ENCODE measurements at regions of chr16 and their contacts with region 1.

Region 1: GRCh38 chr16:31179747-31180459 is at the start of gene FUS:
- DNase-seq: peak; percentile 91
- ATAC-seq: peak; percentile 69
- H3K4me3 Mint-ChIP-seq: peak within 1 kb of the TSS; percentile 96
- H3K27ac Mint-ChIP-seq: peak within 1 kb of the TSS; percentile 100
- H3K4me1 Mint-ChIP-seq: peaks cover 57% of the 10 kb centered on the region
- H3K27me3 Mint-ChIP-seq: no peaks in the 10 kb centered on the region
- CTCF ChIP-seq: no peak
- total RNA-seq, gene FUS: 681 and 752 TPM in 2 replicates

Region 2: GRCh38 chr16:30948667-30949649 is 230.9 kb before region 1 on chr16 and contains the start of gene ORAI3:
- CTCF ChIA-PET with region 1: no interaction called
- POLR2A ChIA-PET with region 1: interaction called, 10 read pairs
- intact Hi-C with region 1: no loop called
- DNase-seq: peak; percentile 73
- ATAC-seq: peak; percentile 82
- H3K4me3 Mint-ChIP-seq: peak within 1 kb of the TSS; percentile 92
- H3K27ac Mint-ChIP-seq: peak within 1 kb of the TSS; percentile 86
- H3K4me1 Mint-ChIP-seq: peaks cover 27% of the 10 kb centered on the region
- H3K27me3 Mint-ChIP-seq: no peaks in the 10 kb centered on the region
- CTCF ChIP-seq: no peak
- total RNA-seq, gene ORAI3: 25.1 and 30.6 TPM in 2 replicates

Region 3: DNA sequence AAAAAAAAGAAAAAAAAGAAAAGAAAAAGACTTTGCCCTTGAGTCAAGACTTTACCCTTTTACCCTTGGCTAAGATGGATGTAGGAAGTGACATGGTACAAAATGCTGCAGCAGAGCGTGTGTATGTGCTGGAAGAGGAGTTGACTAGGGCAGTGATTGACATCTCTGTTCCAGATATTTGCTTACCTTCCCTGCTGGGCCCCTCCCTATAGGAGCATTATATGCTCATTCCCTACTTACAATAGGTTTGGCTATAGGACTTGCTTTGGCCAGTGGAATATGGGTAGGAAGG is 135.8 kb before region 1 on chr16:
- CTCF ChIA-PET with region 1: no interaction called
- POLR2A ChIA-PET with region 1: no interaction called
- intact Hi-C with region 1: no loop called
- DNase-seq: no peak
- ATAC-seq: no peak
- H3K4me3 Mint-ChIP-seq: no peak overlapping the region
- H3K27ac Mint-ChIP-seq: no peak overlapping the region
- H3K4me1 Mint-ChIP-seq: no peaks in the 10 kb centered on the region
- H3K27me3 Mint-ChIP-seq: no peaks in the 10 kb centered on the region
- CTCF ChIP-seq: no peak

Region 4: DNA sequence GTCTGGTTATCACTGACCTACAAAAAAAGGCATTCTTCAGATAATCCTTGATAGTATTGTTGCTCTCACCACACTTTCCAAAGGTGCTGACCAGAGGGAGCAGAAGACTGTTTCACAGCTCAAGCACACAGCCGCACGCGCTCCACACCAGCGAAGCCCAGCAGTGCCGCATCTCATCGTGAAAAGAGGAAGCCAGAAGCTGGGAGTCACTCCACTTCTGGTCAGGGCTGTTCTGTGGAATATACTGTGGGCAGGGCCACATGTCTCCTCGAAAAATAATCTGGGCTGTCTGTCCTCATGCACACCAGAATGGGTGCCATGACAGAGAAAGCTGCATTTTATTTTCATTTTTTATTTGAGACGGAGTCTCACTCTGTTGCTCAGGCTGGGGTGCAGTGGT is 22.8 kb before region 1 on chr16:
- CTCF ChIA-PET with region 1: no interaction called
- POLR2A ChIA-PET with region 1: interaction called, 13 read pairs
- intact Hi-C with region 1: loop called (anchors 2 kb)
- DNase-seq: no peak
- ATAC-seq: no peak
- H3K4me3 Mint-ChIP-seq: no peak overlapping the region
- H3K27ac Mint-ChIP-seq: no peak overlapping the region
- H3K4me1 Mint-ChIP-seq: peaks cover 8% of the 10 kb centered on the region
- H3K27me3 Mint-ChIP-seq: peaks cover 2% of the 10 kb centered on the region
- CTCF ChIP-seq: no peak

Region 5: GRCh38 chr16:31215287-31216162 is 35.6 kb after region 1 on chr16:
- CTCF ChIA-PET with region 1: no interaction called
- POLR2A ChIA-PET with region 1: interaction called, 26 read pairs
- intact Hi-C with region 1: no loop called
- DNase-seq: peak; percentile 37
- ATAC-seq: peak; percentile 63
- H3K4me3 Mint-ChIP-seq: peak overlapping the region; percentile 83
- H3K27ac Mint-ChIP-seq: no peak overlapping the region
- H3K4me1 Mint-ChIP-seq: peaks cover 48% of the 10 kb centered on the region
- H3K27me3 Mint-ChIP-seq: peaks cover 19% of the 10 kb centered on the region
- CTCF ChIP-seq: no peak

Region 6: GRCh38 chr16:31301708-31302400 is 122.0 kb after region 1 on chr16:
- CTCF ChIA-PET with region 1: no interaction called
- POLR2A ChIA-PET with region 1: interaction called, 11 read pairs
- intact Hi-C with region 1: no loop called
- DNase-seq: no peak
- ATAC-seq: peak; percentile 56
- H3K4me3 Mint-ChIP-seq: no peak overlapping the region
- H3K27ac Mint-ChIP-seq: no peak overlapping the region
- H3K4me1 Mint-ChIP-seq: peaks cover 17% of the 10 kb centered on the region
- H3K27me3 Mint-ChIP-seq: no peaks in the 10 kb centered on the region
- CTCF ChIP-seq: no peak

Region 7: DNA sequence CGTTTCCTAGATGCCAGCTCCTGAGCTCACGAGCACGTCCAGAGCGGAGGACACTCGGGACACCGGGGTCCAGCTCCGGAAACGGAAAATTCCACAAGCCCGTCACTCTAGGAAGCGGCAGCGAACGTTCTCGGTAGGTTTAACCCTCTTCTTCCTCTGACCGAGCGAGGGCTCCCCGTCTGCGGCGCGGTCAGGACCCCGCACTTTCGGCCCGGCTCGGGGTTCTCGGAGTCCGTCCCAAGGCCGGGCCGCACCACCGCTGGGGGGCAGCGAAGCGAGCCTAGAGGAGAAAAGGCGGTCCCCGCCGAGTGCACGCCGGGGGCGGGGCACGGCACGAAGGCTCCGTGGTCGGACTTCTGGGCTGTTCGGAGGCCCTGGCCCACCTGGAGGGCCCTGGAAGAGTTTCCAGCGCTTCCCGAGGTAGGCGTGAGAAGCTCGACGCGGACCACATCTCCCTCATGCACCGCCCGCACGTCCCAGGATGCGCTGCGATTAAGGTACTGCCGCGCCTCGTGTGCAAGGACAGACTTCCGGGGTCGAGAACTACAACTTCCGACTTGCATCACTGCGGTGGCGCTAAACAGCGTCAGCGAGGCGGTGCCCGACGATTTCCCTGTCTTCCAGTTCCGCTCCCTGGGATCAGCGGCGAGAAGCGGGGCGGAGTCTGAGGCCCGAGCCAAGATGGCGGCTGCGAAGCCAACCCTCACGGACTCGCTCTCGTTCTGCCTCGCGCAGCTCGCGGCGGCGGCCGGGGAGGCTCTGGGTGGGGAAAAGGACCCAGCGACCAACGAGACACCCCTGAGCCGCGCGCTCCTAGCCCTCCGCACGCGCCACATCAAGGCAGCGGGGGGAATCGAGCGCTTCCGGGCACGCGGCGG is 279.2 kb after region 1 on chr16 and contains the start of gene ARMC5:
- CTCF ChIA-PET with region 1: no interaction called
- POLR2A ChIA-PET with region 1: interaction called, 33 read pairs
- intact Hi-C with region 1: loop called (anchors 1 kb)
- DNase-seq: peak; percentile 93
- ATAC-seq: peak; percentile 75
- H3K4me3 Mint-ChIP-seq: peak within 1 kb of the TSS; percentile 91
- H3K27ac Mint-ChIP-seq: peak within 1 kb of the TSS; percentile 98
- H3K4me1 Mint-ChIP-seq: peaks cover 50% of the 10 kb centered on the region
- H3K27me3 Mint-ChIP-seq: no peaks in the 10 kb centered on the region
- CTCF ChIP-seq: no peak
- total RNA-seq, gene ARMC5: 10.9 TPM in 2 replicates

Region 8: DNA sequence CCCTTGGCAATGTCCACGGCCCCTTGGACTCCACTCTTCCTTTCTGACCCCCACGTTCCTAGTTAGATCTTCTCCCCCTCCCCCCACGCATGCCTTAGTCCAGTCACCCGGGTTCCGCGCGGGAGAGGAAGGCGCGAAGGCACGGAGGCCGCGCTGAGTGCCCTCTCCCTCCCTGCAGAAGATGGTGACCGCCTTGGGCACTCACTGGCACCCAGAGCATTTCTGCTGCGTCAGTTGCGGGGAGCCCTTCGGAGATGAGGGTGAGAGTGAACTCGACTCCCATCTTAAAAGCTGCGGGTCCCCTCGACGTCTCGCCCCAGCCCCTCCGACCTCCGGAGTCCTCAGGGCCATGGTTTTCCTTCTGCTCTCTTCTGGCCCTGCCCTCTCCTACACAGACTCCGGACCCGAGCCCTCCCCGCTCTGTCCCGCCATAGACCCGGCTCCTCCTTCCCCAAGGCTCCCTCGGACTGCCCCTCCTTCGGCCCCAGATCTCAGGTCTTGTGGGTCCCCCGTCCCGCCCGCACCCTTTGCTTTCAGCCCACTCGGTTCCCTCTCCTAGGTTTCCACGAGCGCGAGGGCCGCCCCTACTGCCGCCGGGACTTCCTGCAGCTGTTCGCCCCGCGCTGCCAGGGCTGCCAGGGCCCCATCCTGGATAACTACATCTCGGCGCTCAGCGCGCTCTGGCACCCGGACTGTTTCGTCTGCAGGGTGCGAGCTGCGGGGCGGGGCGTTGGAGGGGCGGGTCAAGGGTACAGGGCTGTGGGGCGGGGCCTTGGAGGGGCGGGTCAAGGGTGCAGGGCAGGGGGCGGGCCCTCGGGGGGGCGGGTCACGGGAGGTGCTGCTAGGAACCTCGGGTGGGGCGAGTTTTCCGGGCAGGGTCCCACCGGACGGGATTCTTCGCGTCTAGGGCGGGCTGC is 296.7 kb after region 1 on chr16:
- CTCF ChIA-PET with region 1: no interaction called
- POLR2A ChIA-PET with region 1: no interaction called
- intact Hi-C with region 1: no loop called
- DNase-seq: peak; percentile 64
- ATAC-seq: peak; percentile 92
- H3K4me3 Mint-ChIP-seq: peak overlapping the region; percentile 85
- H3K27ac Mint-ChIP-seq: no peak overlapping the region
- H3K4me1 Mint-ChIP-seq: peaks cover 25% of the 10 kb centered on the region
- H3K27me3 Mint-ChIP-seq: peaks cover 2% of the 10 kb centered on the region
- CTCF ChIP-seq: no peak